Left cardiac atrium (tissue), 4 donors: ENCODE measurements at regions of chr3 and their contacts with region 1.

Region 1: DNA sequence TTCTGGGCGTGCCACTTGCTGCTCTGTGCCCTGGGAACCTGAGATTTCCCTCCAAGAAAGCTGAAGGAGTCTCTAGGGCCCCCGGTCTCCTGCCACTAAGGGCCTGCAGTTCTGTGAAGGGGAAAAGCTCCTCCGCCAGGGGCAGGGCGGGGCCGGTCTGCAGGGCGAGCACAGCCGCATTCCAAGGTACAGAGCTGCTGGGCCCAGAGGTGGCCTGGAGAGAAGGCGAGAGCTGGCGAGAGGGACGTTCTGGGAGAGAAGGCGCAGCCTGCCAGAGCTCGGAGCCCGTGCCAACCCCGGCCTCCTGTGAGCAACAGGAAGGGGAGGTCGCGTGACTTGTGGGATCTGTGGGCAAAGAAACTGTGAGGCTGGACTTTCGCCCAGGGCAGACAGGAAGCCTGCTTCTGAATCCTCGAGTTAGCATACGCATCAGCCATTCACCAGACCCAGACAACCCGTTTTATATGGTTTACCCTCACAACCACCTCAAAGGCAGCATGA is 500.4 kb downstream of the SHQ1 start:
- DNase-seq: peak; percentile 89
- ATAC-seq: peak; percentile 70 to 84

Region 2: DNA sequence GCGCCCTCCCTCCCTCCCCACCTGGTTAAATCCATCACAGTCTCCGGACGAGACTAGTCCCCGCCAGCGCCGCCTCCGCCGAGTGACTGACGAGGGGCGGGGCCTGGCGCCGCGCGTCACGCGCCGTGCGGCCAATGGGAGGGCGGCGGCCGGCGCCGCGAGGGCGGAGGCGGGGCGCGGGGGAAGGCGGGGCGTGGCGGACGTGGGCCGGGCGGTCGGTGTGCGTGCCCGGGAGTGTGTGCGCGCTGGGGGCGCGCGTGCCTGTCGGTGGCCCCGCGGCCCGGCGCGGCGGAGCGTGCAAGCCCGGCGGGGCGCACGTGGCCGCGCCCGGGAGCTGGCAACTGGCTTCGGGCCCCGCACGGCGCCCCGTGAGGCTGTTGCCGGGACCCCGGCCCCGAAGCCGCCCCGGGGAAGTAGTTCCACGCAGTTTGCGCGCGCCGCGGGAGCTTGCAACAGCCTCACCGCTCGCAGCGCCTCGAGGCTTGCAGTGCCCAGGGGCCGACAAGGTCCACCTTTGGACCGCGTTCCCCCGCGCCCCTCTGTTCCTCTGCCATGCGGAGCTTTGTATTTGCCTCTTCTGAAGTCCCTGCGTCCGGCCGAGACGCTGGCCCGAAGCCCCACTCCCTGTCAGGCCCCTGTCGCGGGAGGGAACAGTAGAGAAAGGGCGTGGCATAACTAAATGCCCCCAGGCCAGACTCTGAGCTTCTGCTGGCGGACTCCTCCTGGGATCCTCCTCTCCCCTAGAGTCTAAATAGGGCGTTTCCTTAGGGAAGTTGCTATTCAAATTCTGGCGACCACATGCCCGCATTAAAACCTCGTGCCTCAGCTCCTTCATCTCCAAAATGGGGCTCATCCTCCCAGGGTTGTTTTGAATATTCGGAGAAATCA is 99.4 kb after region 1 on chr3:
- intact Hi-C with region 1: loop called in 1 of 2 experiments (anchors 5 kb)
- DNase-seq: peak; percentile 92
- ATAC-seq: peak; percentile 97 to 99